ENCODE measurements at regions of chr2 and their contacts with region 1.

Region 1: DNA sequence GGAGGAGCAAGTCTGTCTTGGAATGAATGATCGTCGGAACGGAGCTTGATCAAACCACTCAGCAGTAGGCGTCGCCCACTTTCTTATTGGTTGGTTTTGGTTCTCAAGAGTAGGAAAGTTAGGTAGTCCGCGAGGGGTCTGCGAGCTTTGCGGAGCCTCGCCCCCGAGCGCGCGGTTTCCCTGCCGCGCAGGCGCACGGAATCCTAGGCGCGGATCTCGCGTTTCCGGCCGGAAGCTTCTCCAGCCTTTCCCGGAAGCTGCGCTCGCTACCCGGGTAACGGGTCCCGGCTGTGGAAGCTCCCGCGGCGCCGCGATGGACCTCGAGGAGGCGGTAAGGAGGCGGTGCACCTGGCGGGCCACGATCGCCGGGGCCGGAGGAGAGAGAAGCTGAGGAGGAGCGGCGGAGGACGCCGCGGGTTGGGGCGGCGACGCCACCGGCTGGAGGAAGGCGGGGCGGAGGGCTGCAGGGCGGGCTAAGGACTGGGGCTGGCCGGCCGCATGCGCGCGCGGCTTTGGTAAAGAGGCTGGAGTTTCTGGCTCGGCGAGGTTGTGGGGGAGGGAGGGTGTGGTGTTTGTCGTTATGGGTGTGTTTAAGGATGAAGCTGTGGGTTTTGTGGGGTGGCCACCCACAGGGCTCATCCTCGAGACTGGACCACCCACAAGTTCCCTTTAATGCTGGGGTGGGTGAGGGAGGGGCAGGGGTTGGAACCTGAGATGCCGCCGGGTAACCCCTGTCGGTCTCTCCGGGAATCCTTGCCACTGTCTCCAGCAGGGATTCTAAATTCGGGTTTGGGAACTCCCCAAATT is at the start of gene TAF1B:
- DNase-seq: peak; percentile 91
- H3K4me3 Mint-ChIP-seq: peak within 1 kb of the TSS; percentile 88
- H3K27ac Mint-ChIP-seq: peak within 1 kb of the TSS; percentile 89
- H3K4me1 Mint-ChIP-seq: peaks cover 47% of the 10 kb centered on the region
- H3K27me3 Mint-ChIP-seq: no peaks in the 10 kb centered on the region
- total RNA-seq, gene TAF1B: 29.3 and 32.4 TPM in 2 replicates

Region 2: DNA sequence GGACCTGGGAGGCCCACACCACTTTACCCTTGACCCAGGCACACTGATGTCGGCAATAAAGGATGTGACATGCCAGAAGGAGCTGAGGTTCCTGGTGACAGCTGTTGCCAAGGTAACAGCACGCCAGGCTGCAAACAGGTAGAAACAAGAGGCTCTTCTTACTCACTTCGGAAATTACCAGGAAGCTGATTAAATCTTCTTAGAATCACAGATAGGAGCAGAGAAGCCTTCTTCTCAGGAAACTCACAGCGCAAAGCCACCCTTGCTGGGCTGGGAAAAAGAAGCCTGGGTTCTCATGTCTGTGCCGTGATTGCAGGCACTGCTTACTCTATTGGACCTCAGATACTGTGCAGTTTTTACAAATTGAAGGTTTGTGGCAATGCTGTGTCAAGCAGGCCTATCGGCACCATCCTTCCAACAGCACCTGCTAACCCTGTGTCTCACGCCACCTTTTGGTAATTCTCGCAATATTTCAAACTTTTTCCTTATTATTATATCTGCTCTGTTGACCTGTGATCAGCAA is 61.2 kb before region 1 on chr2:
- intact Hi-C with region 1: loop called (anchors 5 kb)
- DNase-seq: peak; percentile 82
- H3K4me3 Mint-ChIP-seq: peak overlapping the region; percentile 66
- H3K27ac Mint-ChIP-seq: peak overlapping the region; percentile 99
- H3K4me1 Mint-ChIP-seq: peaks cover 67% of the 10 kb centered on the region
- H3K27me3 Mint-ChIP-seq: no peaks in the 10 kb centered on the region

Region 3: DNA sequence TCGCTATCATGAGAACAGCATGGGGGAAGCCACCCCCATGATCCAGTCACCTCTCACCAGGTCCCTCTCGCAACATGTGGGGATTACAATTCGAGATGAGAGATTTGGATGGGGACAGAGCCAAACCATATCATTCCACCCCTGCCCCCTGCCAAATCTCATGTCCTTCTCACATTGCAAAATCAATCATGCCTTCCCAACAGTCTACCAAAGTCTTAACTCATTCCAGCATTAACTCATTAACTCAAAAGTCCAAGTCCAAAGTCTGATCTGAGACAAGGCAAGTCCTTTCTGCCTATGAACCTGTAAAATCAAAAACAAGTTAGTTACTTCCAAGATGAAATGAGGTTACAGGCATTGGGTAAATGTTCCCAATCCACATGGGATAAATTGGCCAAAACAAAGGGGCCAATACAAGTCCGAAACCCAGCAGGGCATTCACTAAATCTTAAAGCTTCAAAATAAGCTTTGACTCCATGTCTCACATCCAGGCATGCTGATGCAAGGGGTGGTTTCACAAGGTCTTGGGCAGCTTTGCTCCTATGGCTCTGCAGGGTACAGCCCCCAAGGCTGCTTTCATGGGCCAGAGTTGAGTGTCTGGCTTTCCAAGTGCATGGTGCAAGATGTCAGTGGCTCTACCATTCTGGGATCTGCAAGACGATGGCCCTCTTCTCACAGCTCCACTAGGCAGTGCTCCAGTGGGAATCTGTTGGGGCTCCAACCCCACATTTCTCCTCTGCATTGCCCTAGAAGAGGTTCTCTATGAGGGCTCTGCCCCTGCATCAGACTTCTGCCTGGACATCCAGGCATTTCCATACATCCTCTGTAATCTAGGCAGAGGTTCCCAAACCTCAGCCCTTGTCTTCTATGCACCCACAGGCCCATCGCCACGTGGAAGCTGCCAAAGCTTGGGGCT is 14.6 kb after region 1 on chr2:
- intact Hi-C with region 1: no loop called
- DNase-seq: no peak
- H3K4me3 Mint-ChIP-seq: no peak overlapping the region
- H3K27ac Mint-ChIP-seq: no peak overlapping the region
- H3K4me1 Mint-ChIP-seq: no peaks in the 10 kb centered on the region
- H3K27me3 Mint-ChIP-seq: no peaks in the 10 kb centered on the region

Region 4: GRCh38 chr2:9897331-9897737 is 53.9 kb after region 1 on chr2:
- intact Hi-C with region 1: loop called (anchors 5 kb)
- DNase-seq: no peak
- H3K4me3 Mint-ChIP-seq: no peak overlapping the region
- H3K27ac Mint-ChIP-seq: peak overlapping the region; percentile 48
- H3K4me1 Mint-ChIP-seq: peaks cover 25% of the 10 kb centered on the region
- H3K27me3 Mint-ChIP-seq: no peaks in the 10 kb centered on the region

Region 5: GRCh38 chr2:9951272-9951972 is 108.0 kb after region 1 on chr2 and contains the start of gene GRHL1:
- intact Hi-C with region 1: loop called (anchors 5 kb)
- DNase-seq: peak; percentile 90
- H3K4me3 Mint-ChIP-seq: peak within 1 kb of the TSS; percentile 85
- H3K27ac Mint-ChIP-seq: peak within 1 kb of the TSS; percentile 40
- H3K4me1 Mint-ChIP-seq: peaks cover 11% of the 10 kb centered on the region
- H3K27me3 Mint-ChIP-seq: peaks cover 53% of the 10 kb centered on the region
- total RNA-seq, gene GRHL1: 0.90 and 1.4 TPM in 2 replicates

Region 6: DNA sequence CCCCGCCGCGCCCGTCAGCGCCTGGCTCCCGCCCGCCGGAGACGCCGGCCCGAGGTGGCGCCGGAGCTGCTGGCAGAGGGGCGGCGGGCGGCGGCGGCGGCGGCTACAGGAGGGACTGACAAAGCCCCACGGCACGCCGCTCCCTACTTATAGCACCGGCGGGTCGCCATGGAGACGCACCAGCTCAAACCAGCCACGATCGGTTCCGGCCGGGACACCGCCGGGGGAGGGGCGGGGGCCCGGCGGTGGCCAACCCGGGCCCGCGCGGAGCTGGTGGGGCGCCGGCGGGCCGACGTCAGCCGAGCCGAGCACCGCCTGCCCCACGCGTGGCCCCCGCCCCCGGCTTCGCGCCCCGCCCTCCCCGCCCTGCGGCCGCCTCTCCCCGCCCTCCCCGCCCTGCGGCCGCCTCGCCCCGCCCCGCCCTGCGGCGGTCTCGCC is 604.8 kb after region 1 on chr2 and contains the start of gene ODC1:
- intact Hi-C with region 1: loop called (anchors 10 kb)
- DNase-seq: peak; percentile 91
- H3K4me3 Mint-ChIP-seq: peak within 1 kb of the TSS; percentile 94
- H3K27ac Mint-ChIP-seq: peak within 1 kb of the TSS; percentile 92
- H3K4me1 Mint-ChIP-seq: peaks cover 36% of the 10 kb centered on the region
- H3K27me3 Mint-ChIP-seq: no peaks in the 10 kb centered on the region
- total RNA-seq, gene ODC1: 161 and 164 TPM in 2 replicates

Region 7: GRCh38 chr2:10514743-10515142 is 671.3 kb after region 1 on chr2:
- intact Hi-C with region 1: no loop called
- DNase-seq: no peak
- H3K4me3 Mint-ChIP-seq: no peak overlapping the region
- H3K27ac Mint-ChIP-seq: no peak overlapping the region
- H3K4me1 Mint-ChIP-seq: no peaks in the 10 kb centered on the region
- H3K27me3 Mint-ChIP-seq: peaks cover 10% of the 10 kb centered on the region

Measured in activated T-helper 2 cell treated with anti-CD3 and anti-CD28 coated beads, Interferon-gamma antibody, Interleukin-2, Interleukin-4, amounts not matched to agents 10 μg/mL and 5 μg/mL and 100 μg/mL, durations not matched to agents 14 hours and 24 hours and 36 hours (primary cell).